MCF 10A (cell line): ENCODE measurements at regions of chr1 and their contacts with region 1.

Region 1: GRCh38 chr1:205591522-205592351 is 40.1 kb downstream of the ELK4 start:
- DNase-seq: peak; percentile 99
- H3K4me3 Mint-ChIP-seq: peak overlapping the region; percentile 64
- H3K27ac Mint-ChIP-seq: peak overlapping the region; percentile 39
- H3K4me1 Mint-ChIP-seq: peaks cover 18% of the 10 kb centered on the region
- H3K27me3 Mint-ChIP-seq: no peaks in the 10 kb centered on the region
- CTCF ChIP-seq: peak; percentile 100

Region 2: DNA sequence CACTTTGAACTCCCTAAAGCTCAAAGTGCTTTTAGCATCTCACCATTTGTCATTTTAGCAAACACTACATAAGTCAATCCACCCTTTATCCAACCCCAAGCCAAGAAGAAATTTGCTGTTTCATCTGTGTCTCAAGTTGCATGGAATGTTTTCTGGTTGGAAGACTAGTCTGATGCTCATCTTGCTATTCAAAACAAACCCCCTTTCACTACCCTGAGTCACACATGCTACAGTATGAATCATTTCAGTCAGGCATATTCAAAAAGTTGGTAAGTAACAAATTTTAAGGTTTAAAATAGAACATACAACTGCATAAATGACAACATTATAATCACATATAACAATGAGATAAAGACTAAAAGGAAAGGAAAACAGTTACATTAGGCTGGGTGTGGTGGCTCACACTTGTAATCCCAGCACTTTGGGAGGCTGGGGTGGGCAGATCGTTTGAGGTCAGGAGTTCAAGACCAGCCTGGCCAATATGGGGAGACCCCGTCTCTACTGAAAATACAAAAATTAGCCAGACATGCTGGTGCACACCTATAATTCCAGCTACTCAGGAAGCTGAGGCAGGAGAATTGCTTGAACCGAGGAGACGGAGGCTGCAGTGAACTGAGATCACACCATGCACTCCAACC is 418.9 kb before region 1 on chr1:
- CTCF ChIA-PET with region 1: no interaction called
- POLR2A ChIA-PET with region 1: no interaction called
- intact Hi-C with region 1: no loop called
- DNase-seq: peak; percentile 93
- H3K4me3 Mint-ChIP-seq: no peak overlapping the region
- H3K27ac Mint-ChIP-seq: peak overlapping the region; percentile 95
- H3K4me1 Mint-ChIP-seq: peaks cover 15% of the 10 kb centered on the region
- H3K27me3 Mint-ChIP-seq: no peaks in the 10 kb centered on the region
- CTCF ChIP-seq: no peak

Region 3: DNA sequence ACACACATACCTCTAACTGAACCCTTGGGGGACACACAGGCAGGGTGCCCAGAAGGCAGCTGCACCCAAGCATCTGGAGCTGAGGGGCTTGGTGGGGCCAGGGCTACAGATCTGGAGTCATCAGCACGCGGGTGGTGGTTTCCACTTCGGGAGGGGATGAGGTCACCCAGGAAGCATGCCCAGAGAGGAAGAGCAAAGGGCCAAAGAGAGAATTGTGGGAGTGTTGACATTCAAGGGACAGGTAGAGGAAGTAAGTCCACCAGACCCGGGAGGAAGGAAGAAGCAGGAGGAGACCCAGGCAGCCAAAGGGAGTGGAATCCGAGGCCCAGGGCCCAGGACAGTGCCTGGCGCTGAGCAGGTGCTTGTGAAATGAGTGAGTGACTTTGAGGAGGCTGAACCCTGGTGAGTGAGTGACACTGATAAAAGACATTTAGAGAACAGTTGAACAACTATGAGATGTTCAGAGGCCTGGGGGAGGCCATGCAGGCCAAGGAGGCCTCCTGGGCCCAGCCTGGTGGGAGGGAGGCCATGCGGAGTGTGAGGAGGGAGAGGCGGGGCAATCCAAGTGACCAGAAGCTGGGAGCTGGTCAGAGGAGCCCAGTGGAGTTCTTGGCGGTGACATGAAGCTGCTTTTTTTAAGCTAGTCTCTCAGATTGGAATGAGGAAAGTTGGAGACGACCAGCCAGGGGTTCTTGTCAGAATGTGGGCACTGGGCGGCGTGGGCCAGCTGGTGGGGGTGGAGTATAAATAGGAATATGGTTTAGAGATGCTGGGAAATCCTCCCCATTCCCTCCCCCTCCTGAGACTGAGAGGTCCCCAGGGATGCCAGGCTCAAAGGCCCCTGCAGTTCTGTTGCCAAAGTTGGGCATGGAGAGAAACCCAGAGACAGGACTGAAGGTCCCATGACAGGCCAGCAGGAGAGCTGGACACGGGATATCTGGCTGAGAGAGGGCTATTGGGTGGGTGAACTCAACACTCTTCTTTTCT is 79.4 kb before region 1 on chr1:
- CTCF ChIA-PET with region 1: interaction called, 11 read pairs
- POLR2A ChIA-PET with region 1: interaction called, 3 read pairs
- intact Hi-C with region 1: no loop called
- DNase-seq: no peak
- H3K4me3 Mint-ChIP-seq: no peak overlapping the region
- H3K27ac Mint-ChIP-seq: no peak overlapping the region
- H3K4me1 Mint-ChIP-seq: no peaks in the 10 kb centered on the region
- H3K27me3 Mint-ChIP-seq: no peaks in the 10 kb centered on the region
- CTCF ChIP-seq: no peak

Region 4: DNA sequence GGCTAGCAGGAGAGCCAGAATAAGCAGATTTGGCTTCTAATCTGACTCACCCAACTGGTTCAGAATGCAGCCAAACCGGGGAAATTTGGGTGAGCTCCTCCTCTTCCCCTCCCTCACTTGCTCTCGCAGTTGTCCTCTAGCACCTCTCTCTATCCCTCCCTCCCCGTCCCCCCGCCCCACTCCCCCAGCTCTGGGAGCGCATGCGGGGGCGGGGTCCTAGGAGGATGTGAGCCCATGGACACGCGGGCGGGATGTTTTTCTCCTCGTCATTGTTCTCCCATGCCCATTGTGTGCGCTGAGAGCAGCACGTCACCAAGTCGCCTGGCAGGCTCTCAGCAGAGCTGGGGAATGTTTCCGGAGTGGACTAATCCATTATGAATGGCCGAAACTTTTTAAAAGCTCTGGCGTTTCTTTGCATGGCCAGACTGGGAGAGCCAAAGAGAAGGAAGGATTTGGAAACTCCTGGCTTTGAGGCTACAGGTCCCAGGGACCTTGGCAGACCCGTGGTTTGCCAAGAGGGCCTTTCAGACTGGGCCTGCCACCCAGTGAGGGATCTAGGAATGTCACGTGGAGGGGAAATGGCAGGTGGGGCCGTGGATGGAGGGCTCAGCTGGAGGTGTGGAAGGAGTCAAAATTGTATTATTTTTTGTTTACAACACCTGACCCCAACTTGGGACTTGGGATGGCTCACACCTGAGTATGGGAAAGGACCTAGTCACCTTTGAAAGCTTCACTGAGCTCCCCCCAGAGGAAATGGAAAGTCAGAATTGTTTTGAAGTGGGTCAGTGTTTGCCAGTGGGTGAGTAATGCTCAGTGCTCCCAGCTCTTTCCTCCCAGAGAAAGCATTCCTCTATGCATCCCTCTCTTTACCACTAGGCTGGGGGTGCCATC is 48.1 kb before region 1 on chr1:
- CTCF ChIA-PET with region 1: interaction called, 11 read pairs
- POLR2A ChIA-PET with region 1: interaction called, 11 read pairs
- intact Hi-C with region 1: no loop called
- DNase-seq: peak; percentile 99
- H3K4me3 Mint-ChIP-seq: peak overlapping the region; percentile 66
- H3K27ac Mint-ChIP-seq: peak overlapping the region; percentile 58
- H3K4me1 Mint-ChIP-seq: peaks cover 9% of the 10 kb centered on the region
- H3K27me3 Mint-ChIP-seq: peaks cover 7% of the 10 kb centered on the region
- CTCF ChIP-seq: no peak

Region 5: GRCh38 chr1:205616563-205617293 is 25.0 kb after region 1 on chr1:
- CTCF ChIA-PET with region 1: interaction called, 18 read pairs
- POLR2A ChIA-PET with region 1: interaction called, 10 read pairs
- intact Hi-C with region 1: no loop called
- DNase-seq: no peak
- H3K4me3 Mint-ChIP-seq: no peak overlapping the region
- H3K27ac Mint-ChIP-seq: no peak overlapping the region
- H3K4me1 Mint-ChIP-seq: peaks cover 6% of the 10 kb centered on the region
- H3K27me3 Mint-ChIP-seq: no peaks in the 10 kb centered on the region
- CTCF ChIP-seq: no peak

Region 6: DNA sequence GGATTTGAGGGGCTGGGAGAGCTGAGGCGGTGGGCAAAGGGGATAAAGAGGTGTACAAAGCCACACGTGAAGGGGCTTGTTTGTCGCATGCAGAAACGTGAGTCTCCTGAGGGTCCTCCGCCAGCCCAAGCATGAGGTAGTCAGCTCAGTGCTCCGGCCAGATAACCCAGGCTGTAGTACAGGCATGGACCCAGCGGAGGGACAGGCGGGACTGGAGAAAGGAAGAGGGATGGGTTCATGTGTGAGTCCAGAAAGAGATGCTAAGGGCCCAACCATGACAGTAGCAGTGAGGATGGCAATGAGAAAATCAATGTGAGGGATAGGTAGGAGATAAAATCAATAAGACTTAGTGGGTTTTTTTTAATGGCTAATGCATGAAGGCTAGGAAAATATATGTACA is 53.8 kb after region 1 on chr1:
- CTCF ChIA-PET with region 1: interaction called, 25 read pairs
- POLR2A ChIA-PET with region 1: interaction called, 9 read pairs
- intact Hi-C with region 1: no loop called
- DNase-seq: no peak
- H3K4me3 Mint-ChIP-seq: no peak overlapping the region
- H3K27ac Mint-ChIP-seq: no peak overlapping the region
- H3K4me1 Mint-ChIP-seq: no peaks in the 10 kb centered on the region
- H3K27me3 Mint-ChIP-seq: no peaks in the 10 kb centered on the region
- CTCF ChIP-seq: no peak

Region 7: DNA sequence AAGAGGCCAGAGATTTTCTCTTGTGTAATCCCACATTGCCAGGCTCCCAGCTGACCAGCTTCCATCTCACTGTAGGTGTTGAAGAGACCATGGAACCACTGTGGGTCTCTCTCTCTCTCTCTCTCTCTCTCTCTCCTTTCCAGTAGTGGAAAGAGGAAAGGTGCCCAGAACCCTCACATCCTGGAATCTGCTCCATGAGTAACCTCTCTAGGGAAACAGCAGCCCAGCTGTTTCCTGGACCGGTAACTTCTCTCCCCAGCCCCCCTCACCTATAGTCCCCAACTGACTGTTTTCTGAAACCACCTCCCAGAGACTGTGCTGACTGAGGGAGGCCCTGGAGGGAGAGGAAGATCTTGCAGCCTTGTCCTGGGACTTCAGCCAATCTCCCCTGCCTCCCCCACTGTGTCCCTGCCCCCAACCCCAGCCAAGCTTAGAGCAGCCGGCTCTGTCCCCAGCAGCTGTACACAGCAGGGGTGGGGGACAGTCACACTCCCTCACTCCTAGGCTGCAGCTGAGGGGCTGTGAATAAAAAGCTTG is 109.2 kb after region 1 on chr1:
- CTCF ChIA-PET with region 1: interaction called, 11 read pairs
- POLR2A ChIA-PET with region 1: interaction called, 6 read pairs
- intact Hi-C with region 1: no loop called
- DNase-seq: peak; percentile 33
- H3K4me3 Mint-ChIP-seq: no peak overlapping the region
- H3K27ac Mint-ChIP-seq: no peak overlapping the region
- H3K4me1 Mint-ChIP-seq: peaks cover 6% of the 10 kb centered on the region
- H3K27me3 Mint-ChIP-seq: no peaks in the 10 kb centered on the region
- CTCF ChIP-seq: no peak